Left lung (tissue), 14 donors: ENCODE measurements at regions of chr4 and their contacts with region 1.

Region 1: GRCh38 chr4:55948726-55949474 is at the start of gene CEP135:
- DNase-seq: peak; percentile 94 to 99 (median 96)
- ATAC-seq: peak; percentile 96
- H3K4me3 ChIP-seq: peak within 1 kb of the TSS; percentile 58 to 66
- H3K27ac ChIP-seq: peak within 1 kb of the TSS; percentile 95 to 100
- H3K4me1 ChIP-seq: peaks cover 4 to 28% of the 10 kb centered on the region in 2 donors
- H3K27me3 ChIP-seq: no peaks in the 10 kb centered on the region
- CTCF ChIP-seq: peak; percentile 92 to 95
- polyA plus RNA-seq, gene CEP135: 16.0 to 23.0 (median 19.2) TPM

Region 2: DNA sequence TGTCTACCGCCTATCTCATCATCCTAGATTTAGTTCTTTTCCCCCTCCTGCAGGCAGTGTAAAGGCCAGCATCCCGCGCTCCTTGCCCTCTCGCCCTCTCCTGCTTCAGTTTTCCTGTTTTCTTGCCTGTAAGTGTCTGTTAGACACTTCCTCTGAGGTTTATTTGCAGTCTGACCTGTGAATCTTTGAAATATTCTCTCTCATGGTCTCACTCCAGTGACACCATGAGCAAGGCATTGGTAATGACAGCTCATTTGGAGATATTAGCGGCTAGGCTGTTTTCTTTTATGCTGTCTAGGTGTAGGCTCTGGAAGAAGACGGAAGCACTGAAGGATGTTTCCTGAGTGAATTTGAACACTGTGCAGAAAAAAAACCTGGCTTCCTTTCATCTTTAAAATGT is 1003.1 kb before region 1 on chr4:
- intact Hi-C with region 1: no loop called
- DNase-seq: no peak
- ATAC-seq: no peak
- H3K4me3 ChIP-seq: no peak overlapping the region
- H3K27ac ChIP-seq: no peak overlapping the region
- H3K4me1 ChIP-seq: peaks cover 0 to 3% of the 10 kb centered on the region in 2 donors
- H3K27me3 ChIP-seq: no peaks in the 10 kb centered on the region
- CTCF ChIP-seq: no peak

Region 3: DNA sequence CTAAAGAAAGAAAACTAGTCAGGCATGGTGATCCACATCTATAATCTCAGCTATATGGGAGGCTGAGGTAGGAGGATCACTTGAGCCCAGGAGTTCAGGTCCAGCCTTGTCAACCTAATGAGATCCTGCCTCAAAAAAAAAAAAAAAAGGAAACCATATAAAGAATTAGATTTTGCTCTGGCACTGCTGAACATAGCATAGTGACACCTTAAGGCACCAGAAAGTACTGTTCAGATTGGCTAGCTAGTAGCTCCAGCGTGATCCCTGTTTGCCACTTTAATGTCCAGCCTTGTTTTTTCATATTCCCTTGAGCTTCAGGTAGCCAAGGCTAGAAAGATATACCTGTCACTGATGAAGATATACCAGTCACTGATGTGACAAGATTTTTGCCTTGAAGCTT is 61.3 kb before region 1 on chr4:
- intact Hi-C with region 1: no loop called
- DNase-seq: no peak
- ATAC-seq: no peak
- H3K4me3 ChIP-seq: no peak overlapping the region
- H3K27ac ChIP-seq: no peak overlapping the region
- H3K4me1 ChIP-seq: no peaks in the 10 kb centered on the region
- H3K27me3 ChIP-seq: no peaks in the 10 kb centered on the region
- CTCF ChIP-seq: no peak

Region 4: GRCh38 chr4:56055027-56055977 is 106.4 kb after region 1 on chr4:
- intact Hi-C with region 1: no loop called
- DNase-seq: no peak
- ATAC-seq: no peak
- H3K4me3 ChIP-seq: no peak overlapping the region
- H3K27ac ChIP-seq: no peak overlapping the region
- H3K4me1 ChIP-seq: no peaks in the 10 kb centered on the region
- H3K27me3 ChIP-seq: peaks cover 26 to 36% of the 10 kb centered on the region in 2 donors
- CTCF ChIP-seq: no peak

Region 5: GRCh38 chr4:56301181-56302076 is 352.5 kb after region 1 on chr4:
- intact Hi-C with region 1: loop called in 1 of 2 experiments (anchors 10 kb)
- DNase-seq: peak; percentile 70 to 83 (median 74)
- ATAC-seq: peak; percentile 100
- H3K4me3 ChIP-seq: no peak overlapping the region
- H3K27ac ChIP-seq: peak overlapping the region in 1 of 2 donors; percentile 15
- H3K4me1 ChIP-seq: peaks cover 0 to 7% of the 10 kb centered on the region in 2 donors
- H3K27me3 ChIP-seq: no peaks in the 10 kb centered on the region
- CTCF ChIP-seq: peak; percentile 77 to 90